ENCODE measurements at regions of chr9 and their contacts with region 1.

Region 1: GRCh38 chr9:96854073-96854876 is at the start of gene ZNF782:
- DNase-seq: peak; percentile 47
- H3K4me3 ChIP-seq: peak within 1 kb of the TSS; percentile 91
- CTCF ChIP-seq: no peak

Region 2: DNA sequence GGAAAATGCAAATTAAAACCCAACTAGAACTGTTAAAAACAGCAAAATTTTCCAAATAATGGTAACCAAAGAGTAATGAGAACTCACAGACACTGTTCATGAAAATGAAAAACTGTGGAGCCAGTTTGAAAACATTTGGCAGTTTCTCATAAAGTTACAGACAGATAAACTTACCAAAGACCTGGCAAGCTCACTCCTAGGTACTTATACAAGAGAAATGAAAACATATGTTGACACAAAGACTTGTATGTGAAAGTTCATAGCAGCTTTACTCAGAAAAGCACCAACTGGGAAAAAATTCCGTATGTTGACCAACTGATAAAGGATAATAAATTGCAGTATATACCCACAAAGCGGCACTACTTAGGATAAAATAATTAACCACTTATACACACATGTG is 10.2 kb before region 1 on chr9:
- CTCF ChIA-PET with region 1: interaction called, 11 read pairs
- POLR2A ChIA-PET with region 1: no interaction called
- DNase-seq: no peak
- H3K4me3 ChIP-seq: no peak overlapping the region
- CTCF ChIP-seq: no peak

Region 3: GRCh38 chr9:96875461-96876364 is 21.4 kb after region 1 on chr9:
- CTCF ChIA-PET with region 1: interaction called, 29 read pairs
- POLR2A ChIA-PET with region 1: no interaction called
- DNase-seq: no peak
- H3K4me3 ChIP-seq: peak overlapping the region; percentile 68
- CTCF ChIP-seq: no peak

Region 4: GRCh38 chr9:97398999-97399758 is 544.9 kb after region 1 on chr9:
- CTCF ChIA-PET with region 1: interaction called, 197 read pairs
- POLR2A ChIA-PET with region 1: no interaction called
- DNase-seq: peak; percentile 16
- H3K4me3 ChIP-seq: no peak overlapping the region
- CTCF ChIP-seq: peak; percentile 97

Region 5: DNA sequence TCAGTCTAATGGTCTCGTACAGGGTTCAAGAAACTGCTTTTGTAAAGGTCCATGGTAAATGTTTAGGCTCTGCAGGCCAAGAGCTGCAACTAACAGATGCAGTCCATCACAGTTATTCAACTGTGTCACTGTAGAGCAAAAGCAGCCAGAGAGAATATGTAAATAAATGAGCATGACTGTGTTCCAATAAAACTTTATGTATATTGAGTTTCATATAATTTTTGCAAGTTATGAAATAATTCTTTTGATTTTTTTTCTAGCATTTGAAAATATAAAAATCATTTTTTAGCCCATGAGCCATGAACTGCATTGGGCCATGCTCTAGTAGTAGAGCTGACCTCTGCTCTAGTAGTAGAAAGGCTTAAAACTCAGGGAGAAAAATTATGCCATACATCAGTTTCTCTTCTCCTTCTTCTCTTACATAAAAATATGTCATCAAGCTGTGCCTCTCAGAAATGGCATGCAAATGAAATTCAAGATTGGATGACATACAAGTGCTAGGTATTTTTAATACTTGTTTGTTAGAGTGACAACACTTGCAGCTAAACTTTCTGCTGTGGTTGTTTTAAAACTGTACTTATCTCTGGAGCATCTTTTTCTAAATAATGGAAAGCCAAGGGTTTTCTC is 604.9 kb after region 1 on chr9:
- CTCF ChIA-PET with region 1: no interaction called
- POLR2A ChIA-PET with region 1: no interaction called
- DNase-seq: no peak
- H3K4me3 ChIP-seq: no peak overlapping the region
- CTCF ChIP-seq: no peak

Region 6: DNA sequence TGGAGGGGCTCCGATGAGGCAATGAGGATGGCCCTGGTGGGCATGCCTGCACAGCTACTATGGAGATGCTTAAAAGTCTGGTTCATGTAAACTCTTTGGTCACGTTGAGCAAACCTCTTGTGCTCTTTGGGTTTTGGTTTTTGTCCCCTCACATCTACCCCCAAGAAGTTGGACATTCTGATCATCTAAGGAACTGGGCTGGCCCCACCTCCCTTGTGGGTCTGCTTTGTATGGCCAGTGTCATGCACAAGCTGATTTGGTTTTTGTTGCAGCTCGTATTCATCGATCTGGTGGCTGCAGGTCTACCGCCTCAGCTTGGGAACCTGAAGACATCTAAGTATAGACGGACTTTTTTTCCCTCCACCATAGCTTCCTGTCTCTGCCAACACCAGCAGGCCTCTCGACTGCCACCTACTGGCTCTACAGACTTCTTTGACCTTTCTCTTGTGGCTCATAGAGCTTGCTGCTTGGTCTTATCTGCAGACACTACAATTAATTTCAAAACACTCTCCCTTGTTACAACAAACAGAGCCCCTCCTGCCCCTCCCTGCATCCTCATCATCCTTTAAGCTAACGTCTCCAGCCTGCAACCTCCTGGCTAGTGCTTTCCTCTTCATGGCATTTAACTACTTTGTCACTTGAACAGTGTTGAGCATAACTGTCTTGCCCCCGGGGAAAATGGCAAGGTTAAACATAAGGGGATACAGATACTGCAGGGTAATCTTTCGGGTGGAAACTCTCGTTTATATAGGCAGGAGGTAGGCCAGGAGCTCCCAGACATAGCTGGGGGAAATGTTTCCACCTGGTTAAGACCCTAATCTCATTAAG is 744.4 kb after region 1 on chr9:
- CTCF ChIA-PET with region 1: interaction called, 65 read pairs
- POLR2A ChIA-PET with region 1: no interaction called
- DNase-seq: peak; percentile 52
- H3K4me3 ChIP-seq: no peak overlapping the region
- CTCF ChIP-seq: peak; percentile 89

Measured in AG04449 (cell line).